Activated B cell treated with CpG ODN at 0.5 μM for 24 hours (primary cell): ENCODE measurements at regions of chr14 and their contacts with region 1.

Region 1: GRCh38 chr14:105682940-105683570 is 156.7 kb downstream of the TMEM121 start:
- DNase-seq: peak; percentile 24
- ATAC-seq: no peak
- H3K4me3 Mint-ChIP-seq: peak overlapping the region; percentile 76
- H3K27ac Mint-ChIP-seq: peak overlapping the region; percentile 95
- H3K4me1 Mint-ChIP-seq: peaks cover 44% of the 10 kb centered on the region
- H3K27me3 Mint-ChIP-seq: no peaks in the 10 kb centered on the region
- CTCF ChIP-seq: no peak

Region 2: DNA sequence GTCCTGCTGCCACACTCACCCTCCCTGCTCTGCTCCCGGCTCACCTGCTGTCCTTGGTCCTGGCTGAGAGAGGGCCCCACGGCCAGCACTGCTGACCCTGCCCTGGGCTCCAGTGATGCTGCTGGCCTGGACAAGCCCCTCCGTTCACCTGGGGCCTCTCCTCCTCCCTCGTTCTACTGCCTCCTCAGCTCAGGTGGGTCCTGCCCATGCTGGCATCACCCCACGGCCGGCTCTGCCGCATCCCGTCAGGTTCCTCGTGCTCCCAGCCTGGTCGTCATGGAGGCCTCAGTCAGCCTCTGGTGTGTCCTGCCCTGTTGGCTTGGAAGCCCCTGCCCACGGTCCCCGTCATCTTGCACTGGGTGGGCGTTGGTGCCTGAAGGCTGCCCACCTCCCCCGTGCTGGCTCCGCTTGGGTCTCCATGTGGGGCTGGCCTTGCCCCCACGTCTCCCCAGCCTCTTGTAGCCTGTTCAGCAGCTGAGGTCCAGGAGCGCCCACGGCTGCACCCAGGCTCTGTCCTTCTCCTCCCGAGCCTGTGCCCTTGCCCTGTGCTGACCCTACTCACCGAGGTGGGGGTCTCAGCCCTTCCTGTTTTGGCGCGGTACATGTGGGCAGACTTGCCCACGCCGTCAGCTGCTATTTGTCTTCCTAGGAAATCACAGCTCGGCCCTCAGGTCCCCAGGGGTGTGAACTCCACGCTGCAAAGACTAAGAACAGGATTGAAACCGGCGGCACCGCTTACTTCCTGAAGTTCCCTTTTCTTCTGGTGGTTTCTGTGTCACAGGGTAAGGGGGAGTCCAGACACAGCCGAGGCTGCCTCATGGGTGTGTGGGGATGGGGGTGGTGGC is 35.1 kb before region 1 on chr14:
- CTCF ChIA-PET with region 1: no interaction called
- POLR2A ChIA-PET with region 1: no interaction called
- intact Hi-C with region 1: no loop called
- DNase-seq: peak; percentile 41
- ATAC-seq: peak; percentile 85
- H3K4me3 Mint-ChIP-seq: peak overlapping the region; percentile 98
- H3K27ac Mint-ChIP-seq: peak overlapping the region; percentile 97
- H3K4me1 Mint-ChIP-seq: peaks cover 50% of the 10 kb centered on the region
- H3K27me3 Mint-ChIP-seq: no peaks in the 10 kb centered on the region
- CTCF ChIP-seq: no peak

Region 3: GRCh38 chr14:105709281-105710118 is 26.4 kb after region 1 on chr14:
- CTCF ChIA-PET with region 1: interaction called, 4 read pairs
- POLR2A ChIA-PET with region 1: interaction called, 6 read pairs
- intact Hi-C with region 1: loop called (anchors 1 kb)
- DNase-seq: no peak
- ATAC-seq: no peak
- H3K4me3 Mint-ChIP-seq: peak overlapping the region; percentile 75
- H3K27ac Mint-ChIP-seq: peak overlapping the region; percentile 85
- H3K4me1 Mint-ChIP-seq: peaks cover 48% of the 10 kb centered on the region
- H3K27me3 Mint-ChIP-seq: no peaks in the 10 kb centered on the region
- CTCF ChIP-seq: no peak

Region 4: GRCh38 chr14:105738261-105739037 is 55.4 kb after region 1 on chr14:
- CTCF ChIA-PET with region 1: no interaction called
- POLR2A ChIA-PET with region 1: no interaction called
- intact Hi-C with region 1: loop called (anchors 10 kb)
- DNase-seq: no peak
- ATAC-seq: peak; percentile 18
- H3K4me3 Mint-ChIP-seq: no peak overlapping the region
- H3K27ac Mint-ChIP-seq: peak overlapping the region; percentile 19
- H3K4me1 Mint-ChIP-seq: peaks cover 20% of the 10 kb centered on the region
- H3K27me3 Mint-ChIP-seq: no peaks in the 10 kb centered on the region
- CTCF ChIP-seq: no peak

Region 5: GRCh38 chr14:105830171-105830570 is 147.1 kb after region 1 on chr14:
- CTCF ChIA-PET with region 1: no interaction called
- POLR2A ChIA-PET with region 1: interaction called, 11 read pairs
- intact Hi-C with region 1: no loop called
- DNase-seq: no peak
- ATAC-seq: peak; percentile 47
- H3K4me3 Mint-ChIP-seq: no peak overlapping the region
- H3K27ac Mint-ChIP-seq: peak overlapping the region; percentile 53
- H3K4me1 Mint-ChIP-seq: peaks cover 31% of the 10 kb centered on the region
- H3K27me3 Mint-ChIP-seq: no peaks in the 10 kb centered on the region
- CTCF ChIP-seq: no peak